Heart right ventricle (tissue), 16 donors: ENCODE measurements at regions of chr12 and their contacts with region 1.

Region 1: DNA sequence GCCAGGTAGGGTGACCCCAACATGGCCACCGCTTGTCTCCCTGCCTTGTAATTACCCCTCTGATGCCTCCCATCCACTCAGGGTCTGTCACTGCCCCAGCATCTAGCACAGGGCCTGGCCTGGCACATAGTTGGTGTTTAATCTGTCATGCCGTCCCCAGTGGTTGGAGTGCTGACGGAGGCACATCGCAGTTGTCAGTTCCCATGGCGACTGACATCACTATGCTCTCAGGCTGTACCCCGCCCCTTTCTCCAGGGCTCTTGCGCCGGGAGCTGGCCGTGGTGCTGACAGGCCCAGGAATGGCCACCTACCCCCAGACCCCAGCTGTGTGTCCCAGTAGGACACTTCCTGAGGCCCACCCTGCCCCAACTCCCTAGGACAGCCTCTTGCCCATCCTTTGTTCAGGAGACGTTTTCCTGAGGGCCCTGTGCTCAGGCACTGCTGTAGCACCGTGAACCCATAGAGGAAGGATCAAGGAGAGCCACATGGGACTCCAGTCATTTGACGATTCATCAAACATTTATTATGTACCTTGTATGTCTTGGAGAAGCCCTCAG is 23.0 kb downstream of the FAM222A start:
- DNase-seq: peak in 1 of 2 donors; percentile 21
- ATAC-seq: peak in 7 of 8 donors; percentile 24 to 68 (median 57)
- H3K4me3 ChIP-seq: no peak overlapping the region
- H3K27ac ChIP-seq: no peak overlapping the region
- H3K4me1 ChIP-seq: peaks cover 0 to 36% (median 17%) of the 10 kb centered on the region in 9 donors
- H3K27me3 ChIP-seq: peaks cover 0 to 20% (median 0%) of the 10 kb centered on the region in 7 donors
- CTCF ChIP-seq: no peak

Region 2: GRCh38 chr12:108327621-108328344 is 1408.8 kb before region 1 on chr12:
- intact Hi-C with region 1: loop called in 1 of 10 experiments (anchors 5 kb)
- DNase-seq: peak in 1 of 2 donors; percentile 49
- ATAC-seq: peak; percentile 27 to 75 (median 70)
- H3K4me3 ChIP-seq: no peak overlapping the region
- H3K27ac ChIP-seq: peak overlapping the region; percentile 20 to 83 (median 62)
- H3K4me1 ChIP-seq: peaks cover 10 to 69% (median 29%) of the 10 kb centered on the region in 9 donors
- H3K27me3 ChIP-seq: no peaks in the 10 kb centered on the region
- CTCF ChIP-seq: no peak